PC-9 (cell line): ENCODE measurements at regions of chr17 and their contacts with region 1.

Region 1: GRCh38 chr17:19648475-19649406 is at the start of gene ALDH3A2:
- DNase-seq: peak; percentile 93 to 99
- H3K4me3 ChIP-seq: peak within 1 kb of the TSS; percentile 92
- H3K27ac ChIP-seq: peak within 1 kb of the TSS; percentile 96
- H3K4me1 ChIP-seq: peaks cover 67% of the 10 kb centered on the region
- H3K27me3 ChIP-seq: no peaks in the 10 kb centered on the region
- CTCF ChIP-seq: no peak; the same call in 1 of the 2 replicates
- total RNA-seq, gene ALDH3A2: 271 and 290 TPM in 2 replicates

Region 2: GRCh38 chr17:19327039-19327776 is 321.5 kb before region 1 on chr17:
- CTCF ChIA-PET with region 1: no interaction called
- POLR2A ChIA-PET with region 1: interaction called, 12 read pairs
- intact Hi-C with region 1: no loop called
- DNase-seq: peak; percentile 75 to 86
- H3K4me3 ChIP-seq: no peak overlapping the region
- H3K27ac ChIP-seq: peak overlapping the region; percentile 49
- H3K4me1 ChIP-seq: peaks cover 17% of the 10 kb centered on the region
- H3K27me3 ChIP-seq: no peaks in the 10 kb centered on the region
- CTCF ChIP-seq: no peak

Region 3: GRCh38 chr17:19569785-19570543 is 78.8 kb before region 1 on chr17:
- CTCF ChIA-PET with region 1: no interaction called
- POLR2A ChIA-PET with region 1: no interaction called
- intact Hi-C with region 1: no loop called
- DNase-seq: peak in 1 of 2 experiments; percentile 51
- H3K4me3 ChIP-seq: no peak overlapping the region
- H3K27ac ChIP-seq: no peak overlapping the region
- H3K4me1 ChIP-seq: no peaks in the 10 kb centered on the region
- H3K27me3 ChIP-seq: no peaks in the 10 kb centered on the region
- CTCF ChIP-seq: no peak

Region 4: DNA sequence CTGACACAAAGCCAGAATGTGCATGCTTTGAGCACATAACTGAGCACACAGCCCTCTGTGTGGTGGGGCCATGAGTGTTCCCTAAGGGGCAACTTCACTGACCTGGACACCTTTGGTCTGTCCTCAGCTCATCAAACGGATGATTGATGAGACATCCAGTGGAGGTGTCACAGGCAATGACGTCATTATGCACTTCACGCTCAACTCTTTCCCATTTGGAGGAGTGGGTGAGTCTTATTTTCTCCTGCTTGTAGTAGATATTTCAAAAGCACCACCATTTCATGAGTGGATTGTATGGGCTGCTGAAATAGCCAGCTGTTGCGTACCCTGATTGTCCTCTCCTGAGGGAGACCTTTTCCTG is 16.1 kb after region 1 on chr17:
- CTCF ChIA-PET with region 1: no interaction called
- POLR2A ChIA-PET with region 1: no interaction called
- intact Hi-C with region 1: no loop called
- DNase-seq: no peak
- H3K4me3 ChIP-seq: no peak overlapping the region
- H3K27ac ChIP-seq: no peak overlapping the region
- H3K4me1 ChIP-seq: peaks cover 17% of the 10 kb centered on the region
- H3K27me3 ChIP-seq: no peaks in the 10 kb centered on the region
- CTCF ChIP-seq: no peak

Region 5: DNA sequence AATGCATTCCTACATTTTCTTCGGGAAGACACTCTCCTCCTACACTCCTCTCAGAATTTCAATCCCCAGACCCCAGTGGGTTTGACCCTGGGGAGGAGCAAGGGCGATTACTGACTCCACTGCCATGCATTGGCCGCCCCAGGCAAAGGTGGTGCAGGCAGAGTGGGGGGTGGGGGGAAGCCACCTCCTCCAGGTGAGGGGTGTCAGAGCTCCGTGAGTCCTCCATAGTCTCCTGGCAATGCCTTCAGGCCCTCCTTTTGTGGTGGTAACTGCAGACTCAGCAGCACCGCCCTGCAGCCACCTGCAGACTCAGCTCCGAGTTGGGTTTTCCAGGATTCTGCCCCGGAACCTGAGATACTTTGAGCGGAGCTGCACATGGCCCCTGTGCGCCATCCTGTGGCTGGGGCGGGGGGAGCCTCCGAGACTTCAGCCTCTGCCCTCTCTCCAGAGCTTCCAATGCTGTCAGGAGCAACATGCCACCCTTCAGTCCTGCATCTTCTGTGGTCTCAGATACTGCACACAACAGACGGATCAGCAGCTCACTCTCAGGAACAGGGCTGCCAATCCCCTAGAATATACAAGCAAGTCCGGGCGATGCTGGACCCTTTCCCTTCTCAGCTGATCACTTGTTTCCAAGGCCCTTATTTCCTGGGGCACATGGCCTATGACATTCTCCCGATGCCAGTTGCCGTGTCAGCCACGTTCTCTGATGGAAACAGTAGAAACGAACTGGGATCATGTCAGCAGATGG is 70.0 kb after region 1 on chr17:
- CTCF ChIA-PET with region 1: interaction called, 4 read pairs
- POLR2A ChIA-PET with region 1: interaction called, 6 read pairs
- intact Hi-C with region 1: loop called (anchors 2 kb)
- DNase-seq: peak in 1 of 2 experiments; percentile 50
- H3K4me3 ChIP-seq: no peak overlapping the region
- H3K27ac ChIP-seq: peak overlapping the region; percentile 66
- H3K4me1 ChIP-seq: peaks cover 87% of the 10 kb centered on the region
- H3K27me3 ChIP-seq: no peaks in the 10 kb centered on the region
- CTCF ChIP-seq: peak; percentile 52

Region 6: DNA sequence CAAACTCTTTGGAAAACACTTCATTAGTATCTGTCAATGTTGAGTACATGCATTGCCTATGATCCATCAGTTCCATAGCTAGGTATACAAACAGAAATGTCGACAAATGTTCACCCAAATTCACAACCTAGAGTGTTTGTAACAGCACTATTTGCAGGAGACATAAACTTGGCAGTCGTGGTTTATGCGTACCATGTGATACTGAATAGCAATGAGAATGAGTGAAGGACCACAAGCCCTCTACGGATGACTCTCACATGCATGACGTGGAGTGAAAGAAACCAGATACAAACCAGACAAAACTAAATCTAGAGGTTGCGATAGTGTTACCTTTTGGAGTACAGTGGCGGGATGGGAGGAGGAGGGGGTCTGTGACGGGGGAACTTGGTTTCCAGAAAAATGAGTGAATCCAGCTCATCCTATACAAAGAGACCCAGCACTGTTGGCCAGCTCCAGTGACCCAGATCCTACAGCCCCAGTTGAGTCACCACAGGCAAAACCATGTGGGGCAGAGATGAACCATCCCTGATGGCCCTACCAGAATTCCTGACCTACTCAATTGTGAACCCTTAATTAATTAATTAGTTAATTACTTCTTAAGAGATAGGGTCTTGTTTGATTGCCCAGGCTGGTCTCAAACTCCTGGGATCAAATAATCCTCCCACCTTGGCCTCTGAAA is 234.9 kb after region 1 on chr17:
- CTCF ChIA-PET with region 1: no interaction called
- POLR2A ChIA-PET with region 1: interaction called, 20 read pairs
- intact Hi-C with region 1: no loop called
- DNase-seq: no peak
- H3K4me3 ChIP-seq: no peak overlapping the region
- H3K27ac ChIP-seq: no peak overlapping the region
- H3K4me1 ChIP-seq: no peaks in the 10 kb centered on the region
- H3K27me3 ChIP-seq: no peaks in the 10 kb centered on the region
- CTCF ChIP-seq: no peak